SK-N-SH (cell line): ENCODE measurements at regions of chr1 and their contacts with region 1.

Region 1: GRCh38 chr1:110312188-110313121 is 26.7 kb upstream of the RBM15 start:
- DNase-seq: peak; percentile 77
- H3K4me3 ChIP-seq: peak overlapping the region in 1 of 2 experiments; percentile 49; a peak in 1 of 4 replicates
- H3K27ac ChIP-seq: no peak overlapping the region
- H3K4me1 ChIP-seq: peaks cover 0 to 4% of the 10 kb centered on the region in 2 experiments; a peak in 1 of 4 replicates
- H3K27me3 ChIP-seq: no peaks in the 10 kb centered on the region; the same call in 1 of the 2 replicates
- CTCF ChIP-seq: peak; percentile 94
- EP300 ChIP-seq: no peak
- RAD21 ChIP-seq: peak; percentile 100

Region 2: DNA sequence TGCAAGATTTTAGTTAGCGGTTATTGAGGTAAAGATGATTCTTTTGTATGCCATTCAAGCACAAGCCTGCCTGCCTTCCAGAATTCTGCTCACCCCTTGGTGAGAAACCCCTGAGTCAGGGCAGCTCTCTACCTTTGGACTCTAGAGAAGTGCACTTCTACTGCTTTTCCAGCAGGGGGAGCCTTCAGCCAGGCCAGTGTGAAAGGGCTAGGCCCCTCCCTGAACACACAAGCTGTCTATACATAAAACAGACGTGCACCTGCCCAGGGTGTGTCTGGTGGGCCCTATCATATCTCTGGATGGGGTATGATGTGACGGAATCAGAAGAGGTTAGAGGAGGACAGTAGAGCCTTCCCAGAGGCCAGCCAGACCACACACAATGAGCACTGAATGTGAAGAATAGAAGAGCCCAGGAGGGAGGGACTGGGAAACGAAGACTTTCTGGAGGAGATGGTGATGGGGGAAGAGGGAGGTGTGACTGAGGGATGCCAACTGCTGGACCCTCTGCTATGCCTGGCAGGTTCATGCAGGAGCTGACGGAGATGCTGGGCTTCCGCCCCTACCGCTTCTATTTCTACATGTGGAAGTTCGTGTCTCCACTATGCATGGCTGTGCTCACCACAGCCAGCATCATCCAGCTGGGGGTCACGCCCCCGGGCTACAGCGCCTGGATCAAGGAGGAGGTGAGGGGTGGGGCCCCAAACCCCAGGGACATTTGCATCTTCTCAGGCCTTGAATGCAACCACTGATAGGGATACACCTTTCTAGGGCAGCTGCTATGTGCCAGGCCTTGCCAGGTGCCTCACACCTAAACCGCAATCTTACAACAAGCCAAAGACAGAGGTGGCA is 115.3 kb before region 1 on chr1:
- CTCF ChIA-PET with region 1: interaction called, 1,300 read pairs
- POLR2A ChIA-PET with region 1: no interaction called
- DNase-seq: peak; percentile 89
- H3K4me3 ChIP-seq: peak overlapping the region in 1 of 2 experiments; percentile 11; a peak in 1 of 4 replicates
- H3K27ac ChIP-seq: no peak overlapping the region; a peak in 1 of 4 replicates
- H3K4me1 ChIP-seq: peaks cover 0 to 20% of the 10 kb centered on the region in 2 experiments; a peak in 1 of 4 replicates
- H3K27me3 ChIP-seq: no peaks in the 10 kb centered on the region
- CTCF ChIP-seq: peak; percentile 90
- EP300 ChIP-seq: no peak
- RAD21 ChIP-seq: peak; percentile 68

Region 3: DNA sequence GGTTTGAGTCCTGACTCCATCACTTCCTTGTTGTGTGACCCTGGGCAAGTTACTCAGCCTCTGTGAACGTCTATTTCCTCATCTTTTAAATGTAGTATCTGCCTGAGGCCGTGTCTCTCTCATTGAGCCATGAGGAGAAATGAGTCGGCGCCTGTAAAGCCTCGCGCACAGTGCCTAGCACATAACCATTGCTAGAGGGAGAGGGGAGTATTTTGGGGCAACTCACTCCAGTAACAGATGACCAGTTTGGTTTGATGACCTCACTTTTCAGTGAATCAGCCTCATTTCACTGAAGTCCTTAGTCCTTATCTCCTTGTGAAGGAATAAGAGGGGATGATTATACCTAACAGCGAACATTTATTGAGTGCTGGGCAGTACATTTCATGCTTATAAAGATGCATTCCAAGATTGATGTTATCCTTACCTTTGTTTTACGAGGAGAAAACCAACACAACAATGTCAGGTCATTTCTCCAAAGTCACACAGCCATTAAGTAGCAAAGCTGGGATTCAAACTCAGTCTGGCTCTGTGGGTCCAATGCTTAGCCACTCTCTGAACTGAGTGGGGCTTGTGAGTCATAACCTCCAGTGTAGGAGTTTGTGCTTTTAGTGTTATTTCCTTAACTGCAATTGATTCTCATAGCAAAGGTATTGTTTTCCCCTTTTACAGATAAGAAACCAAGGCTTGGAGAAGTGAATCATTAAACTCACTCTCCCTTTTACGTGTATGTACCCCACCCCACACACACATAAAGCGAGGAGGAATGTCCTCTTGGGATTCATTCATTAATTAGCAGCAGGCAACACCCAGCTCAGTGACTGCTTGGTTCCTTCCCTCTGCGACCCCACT is 76.4 kb before region 1 on chr1:
- CTCF ChIA-PET with region 1: interaction called, 14 read pairs
- POLR2A ChIA-PET with region 1: no interaction called
- DNase-seq: no peak
- H3K4me3 ChIP-seq: no peak overlapping the region
- H3K27ac ChIP-seq: peak overlapping the region; percentile 14 to 98; a peak in 3 of 4 replicates
- H3K4me1 ChIP-seq: peaks cover 0 to 56% of the 10 kb centered on the region in 2 experiments; a peak in 2 of 4 replicates
- H3K27me3 ChIP-seq: no peaks in the 10 kb centered on the region
- CTCF ChIP-seq: no peak
- EP300 ChIP-seq: no peak
- RAD21 ChIP-seq: no peak

Region 4: GRCh38 chr1:110281363-110282290 is 30.8 kb before region 1 on chr1:
- CTCF ChIA-PET with region 1: interaction called, 26 read pairs
- POLR2A ChIA-PET with region 1: no interaction called
- DNase-seq: peak; percentile 47
- H3K4me3 ChIP-seq: no peak overlapping the region
- H3K27ac ChIP-seq: no peak overlapping the region; a peak in 1 of 4 replicates
- H3K4me1 ChIP-seq: peaks cover 0 to 15% of the 10 kb centered on the region in 2 experiments; a peak in 1 of 4 replicates
- H3K27me3 ChIP-seq: no peaks in the 10 kb centered on the region
- CTCF ChIP-seq: no peak
- EP300 ChIP-seq: peak in 1 of 2 experiments; percentile 20; a peak in 1 of 4 replicates
- RAD21 ChIP-seq: no peak

Region 5: GRCh38 chr1:110298991-110299390 is 13.5 kb before region 1 on chr1:
- CTCF ChIA-PET with region 1: interaction called, 80 read pairs
- POLR2A ChIA-PET with region 1: no interaction called
- DNase-seq: no peak
- H3K4me3 ChIP-seq: no peak overlapping the region
- H3K27ac ChIP-seq: no peak overlapping the region
- H3K4me1 ChIP-seq: no peaks in the 10 kb centered on the region; a peak in 1 of 4 replicates
- H3K27me3 ChIP-seq: 0 out of 2 replicates have a peak, but pooled peaks cover 14% of the 10 kb centered on the region
- CTCF ChIP-seq: no peak
- EP300 ChIP-seq: no peak
- RAD21 ChIP-seq: no peak

Region 6: DNA sequence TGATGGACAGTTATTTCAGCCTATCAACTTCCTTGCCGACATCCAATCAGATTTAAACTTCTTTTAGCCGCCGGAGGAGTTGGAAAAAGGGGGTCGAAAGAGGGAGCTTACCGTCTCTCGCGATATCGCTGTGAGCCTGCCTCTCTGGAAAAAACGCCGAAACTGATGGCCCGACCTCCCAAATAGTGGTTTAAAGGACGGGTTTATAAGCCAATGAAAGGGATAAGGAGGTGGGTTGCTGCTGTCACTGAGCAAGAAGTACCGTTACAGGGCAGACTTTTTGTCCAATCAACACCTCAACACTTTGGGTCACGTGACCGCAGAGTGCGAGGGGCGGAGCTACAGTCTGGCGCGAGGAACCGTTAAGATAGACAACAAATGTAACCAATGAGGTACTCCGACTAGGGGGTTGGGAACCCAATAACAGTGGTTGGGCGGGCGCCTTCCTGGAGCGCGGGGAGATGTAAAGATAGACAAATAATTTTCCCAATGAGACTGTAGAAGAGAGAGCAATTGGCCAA is 26.5 kb after region 1 on chr1 and contains the start of gene RBM15:
- CTCF ChIA-PET with region 1: interaction called, 100 read pairs
- POLR2A ChIA-PET with region 1: interaction called, 4 read pairs
- DNase-seq: peak; percentile 94
- H3K4me3 ChIP-seq: peak within 1 kb of the TSS; percentile 94 to 99
- H3K27ac ChIP-seq: peak within 1 kb of the TSS; percentile 98 to 99
- H3K4me1 ChIP-seq: peaks cover 29 to 44% of the 10 kb centered on the region in 2 experiments
- H3K27me3 ChIP-seq: no peaks in the 10 kb centered on the region
- CTCF ChIP-seq: no peak
- EP300 ChIP-seq: no peak; a peak in 1 of 4 replicates
- RAD21 ChIP-seq: no peak
- polyA plus RNA-seq, gene RBM15: 3.8 and 4.7 TPM in 2 replicates

Region 7: GRCh38 chr1:110455151-110455550 is 142.7 kb after region 1 on chr1:
- CTCF ChIA-PET with region 1: interaction called, 33 read pairs
- POLR2A ChIA-PET with region 1: no interaction called
- DNase-seq: no peak
- H3K4me3 ChIP-seq: no peak overlapping the region
- H3K27ac ChIP-seq: no peak overlapping the region
- H3K4me1 ChIP-seq: no peaks in the 10 kb centered on the region
- H3K27me3 ChIP-seq: peaks cover 33% of the 10 kb centered on the region
- CTCF ChIP-seq: no peak
- EP300 ChIP-seq: no peak
- RAD21 ChIP-seq: no peak

Region 8: GRCh38 chr1:110630839-110631663 is 318.6 kb after region 1 on chr1:
- CTCF ChIA-PET with region 1: no interaction called
- POLR2A ChIA-PET with region 1: no interaction called
- DNase-seq: peak; percentile 78
- H3K4me3 ChIP-seq: no peak overlapping the region
- H3K27ac ChIP-seq: no peak overlapping the region
- H3K4me1 ChIP-seq: no peaks in the 10 kb centered on the region; a peak in 1 of 4 replicates
- H3K27me3 ChIP-seq: peaks cover 7% of the 10 kb centered on the region; the same call in 1 of the 2 replicates
- CTCF ChIP-seq: peak; percentile 78
- EP300 ChIP-seq: no peak
- RAD21 ChIP-seq: peak; percentile 84